Head of caudate nucleus (tissue), 42 donors: ENCODE measurements at regions of chr12 and their contacts with region 1.

Region 1: GRCh38 chr12:104137913-104138796 is at the start of gene NFYB:
- DNase-seq: peak; percentile 86 to 98 (median 95)

Region 2: GRCh38 chr12:103930034-103930786 is 207.9 kb before region 1 on chr12 and contains the start of gene HSP90B1:
- intact Hi-C with region 1: loop called (anchors 10 kb)
- DNase-seq: peak; percentile 96 to 100 (median 99)

Region 3: DNA sequence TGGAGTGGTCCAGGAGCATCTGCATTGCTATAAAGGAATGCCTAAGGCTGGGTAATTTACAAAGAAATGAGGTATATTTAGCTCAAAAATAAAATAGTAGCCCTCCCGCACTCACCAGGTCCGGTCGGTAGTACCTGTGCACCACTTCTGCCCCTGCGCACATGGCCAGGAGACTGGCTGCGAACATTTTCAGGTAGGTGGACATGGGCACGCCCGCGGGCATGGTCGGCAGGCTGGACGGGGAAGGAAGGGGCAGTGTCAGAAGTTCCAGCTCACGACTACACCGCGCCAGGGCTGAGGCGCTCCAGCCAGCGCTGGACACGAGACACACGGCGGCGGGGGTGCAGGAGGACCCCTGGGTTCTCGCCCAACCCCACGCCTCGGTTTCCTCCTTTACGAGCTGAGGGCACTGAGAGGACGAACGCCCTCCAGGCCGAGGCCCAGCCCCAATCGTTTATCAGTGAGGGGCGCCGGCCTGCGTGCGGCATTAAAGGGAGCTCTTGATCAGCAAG is 181.6 kb before region 1 on chr12:
- intact Hi-C with region 1: loop called (anchors 5 kb)
- DNase-seq: peak in 4 of 42 donors; percentile 6 to 17 (median 14)

Region 4: DNA sequence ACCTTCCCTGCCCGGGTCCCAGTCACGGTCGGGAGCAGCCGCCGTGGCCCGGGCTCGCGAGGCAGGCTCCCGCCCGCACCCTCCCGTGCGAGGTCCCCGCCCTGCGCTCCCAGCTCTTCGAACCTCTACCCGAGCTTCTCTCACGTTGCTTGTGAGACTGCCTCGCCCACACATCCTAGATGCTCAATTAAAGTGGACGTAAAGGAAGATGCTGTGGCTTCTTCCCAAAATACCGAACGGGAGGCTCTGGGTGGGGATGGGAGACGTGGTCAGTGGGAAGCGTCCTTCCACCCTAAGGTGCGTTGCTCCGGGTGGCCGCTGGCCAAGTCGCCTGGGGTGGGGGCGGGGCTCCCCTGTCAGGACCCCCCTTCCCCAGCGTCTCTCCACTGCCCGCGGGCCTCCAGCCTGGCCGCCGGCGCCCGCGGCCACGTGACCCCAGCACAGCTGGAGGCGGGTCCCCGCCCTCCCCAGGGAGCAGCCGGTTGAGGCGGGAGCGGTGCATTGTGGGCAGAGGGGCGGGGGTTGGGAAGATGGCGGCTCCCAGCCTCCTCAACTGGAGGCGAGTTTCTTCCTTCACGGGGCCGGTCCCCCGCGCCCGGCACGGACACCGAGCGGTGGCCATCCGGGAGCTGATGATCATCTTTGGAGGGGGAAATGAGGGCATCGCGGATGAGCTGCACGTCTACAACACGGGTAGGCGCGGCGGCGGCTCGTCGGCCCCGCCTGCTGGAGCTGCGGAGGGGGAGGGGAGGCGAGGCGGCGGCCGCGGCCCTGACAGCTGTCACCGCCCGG is 73.9 kb before region 1 on chr12 and contains the start of gene HCFC2:
- intact Hi-C with region 1: loop called (anchors 10 kb)
- DNase-seq: peak; percentile 78 to 98 (median 94)

Region 5: DNA sequence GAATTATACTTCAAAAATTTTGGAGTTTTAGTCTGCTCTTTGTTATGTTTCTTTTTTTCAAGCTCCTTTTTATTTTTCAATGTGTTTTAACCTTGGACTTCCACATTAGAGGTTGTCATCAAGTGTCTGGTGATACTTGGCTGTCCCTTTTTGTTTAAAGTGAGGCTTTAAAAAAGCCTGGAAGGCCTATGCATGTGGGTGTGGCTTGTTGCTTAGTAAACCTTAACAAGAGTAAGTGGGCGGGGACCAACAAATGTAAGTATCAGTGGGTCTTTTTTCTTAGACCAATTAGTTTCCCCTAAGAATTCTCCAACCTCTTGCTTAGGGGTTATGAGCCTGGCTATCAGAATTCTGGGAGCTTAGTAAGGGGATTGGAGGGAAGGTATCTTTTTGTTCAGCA is 47.5 kb before region 1 on chr12:
- intact Hi-C with region 1: no loop called
- DNase-seq: no peak

Region 6: DNA sequence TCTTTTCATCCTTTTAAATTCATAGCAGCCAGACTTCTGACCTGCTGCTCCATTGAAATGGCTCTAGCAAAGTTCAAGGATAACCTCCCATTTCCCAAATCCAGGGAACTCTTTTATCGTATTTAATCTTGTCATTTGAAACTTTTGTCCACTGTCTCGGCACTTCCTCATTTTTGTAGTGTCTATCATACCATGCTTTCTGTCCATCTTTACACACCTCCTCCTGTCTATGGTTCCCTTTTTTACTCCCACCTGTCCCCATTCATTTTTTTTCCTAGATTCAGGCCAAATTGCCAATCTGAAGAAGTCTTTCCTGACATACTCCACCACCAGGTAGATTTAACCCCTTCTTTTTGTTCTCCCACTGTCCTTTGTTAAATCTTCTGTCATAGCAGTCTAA is 31.2 kb before region 1 on chr12:
- intact Hi-C with region 1: no loop called
- DNase-seq: no peak